Left lung (tissue), 14 donors: ENCODE measurements at regions of chr3 and their contacts with region 1.

Region 1: DNA sequence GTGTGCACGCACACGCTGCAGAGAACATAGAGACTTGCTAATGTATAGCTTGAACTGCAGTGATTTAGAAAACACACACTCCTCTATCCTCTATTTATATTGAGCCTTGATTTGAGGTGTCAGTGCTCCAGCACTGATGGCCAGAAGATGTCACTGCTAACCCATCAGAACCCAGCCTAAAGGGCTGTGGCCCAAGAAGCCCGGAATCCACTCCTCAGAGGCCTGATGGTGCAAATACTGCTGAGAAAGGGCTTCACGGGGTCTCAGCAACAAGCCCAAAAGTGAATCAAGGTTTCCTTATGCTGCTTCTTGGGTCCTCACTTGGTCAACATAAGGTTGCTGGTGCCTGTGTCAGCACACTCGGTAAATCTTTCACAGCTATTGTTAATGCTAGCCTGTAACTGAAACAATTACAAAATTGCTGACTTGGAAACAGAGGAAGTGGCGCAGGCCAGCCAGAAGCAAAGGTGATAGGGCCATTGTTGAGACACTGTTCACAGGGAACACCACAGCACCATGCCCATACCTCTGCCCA is 60.3 kb downstream of the HEG1 start:
- DNase-seq: peak in 3 of 4 donors; percentile 54 to 82 (median 63)
- ATAC-seq: peak; percentile 93
- H3K4me3 ChIP-seq: no peak overlapping the region
- H3K27ac ChIP-seq: no peak overlapping the region
- H3K4me1 ChIP-seq: peaks cover 0 to 27% of the 10 kb centered on the region in 2 donors
- H3K27me3 ChIP-seq: no peaks in the 10 kb centered on the region
- CTCF ChIP-seq: peak; percentile 31 to 46

Region 2: GRCh38 chr3:125165189-125165947 is 169.8 kb after region 1 on chr3:
- intact Hi-C with region 1: loop called in 1 of 2 experiments (anchors 5 kb)
- DNase-seq: peak in 1 of 4 donors; percentile 55
- ATAC-seq: peak; percentile 78
- H3K4me3 ChIP-seq: no peak overlapping the region
- H3K27ac ChIP-seq: no peak overlapping the region
- H3K4me1 ChIP-seq: peaks cover 8 to 40% of the 10 kb centered on the region in 2 donors
- H3K27me3 ChIP-seq: no peaks in the 10 kb centered on the region
- CTCF ChIP-seq: peak; percentile 59 to 78

Region 3: GRCh38 chr3:125289429-125289981 is 294.0 kb after region 1 on chr3:
- intact Hi-C with region 1: no loop called
- DNase-seq: no peak
- ATAC-seq: no peak
- H3K4me3 ChIP-seq: no peak overlapping the region
- H3K27ac ChIP-seq: no peak overlapping the region
- H3K4me1 ChIP-seq: peaks cover 0 to 6% of the 10 kb centered on the region in 2 donors
- H3K27me3 ChIP-seq: no peaks in the 10 kb centered on the region
- CTCF ChIP-seq: no peak

Region 4: GRCh38 chr3:125437631-125438435 is 442.3 kb after region 1 on chr3:
- intact Hi-C with region 1: loop called in 1 of 2 experiments (anchors 5 kb)
- DNase-seq: peak in 3 of 4 donors; percentile 32 to 56 (median 53)
- ATAC-seq: peak; percentile 72
- H3K4me3 ChIP-seq: no peak overlapping the region
- H3K27ac ChIP-seq: no peak overlapping the region
- H3K4me1 ChIP-seq: no peaks in the 10 kb centered on the region
- H3K27me3 ChIP-seq: no peaks in the 10 kb centered on the region
- CTCF ChIP-seq: peak; percentile 93 to 98